H1 (cell line): ENCODE measurements at regions of chr9 and their contacts with region 1.

Region 1: GRCh38 chr9:134217832-134218629 is 53.7 kb upstream of the RNU6ATAC start:
- DNase-seq: no peak
- H3K4me3 ChIP-seq: no peak overlapping the region
- H3K27ac ChIP-seq: no peak overlapping the region
- H3K4me1 ChIP-seq: peaks cover 0 to 2% (median 0%) of the 10 kb centered on the region in 4 experiments; a peak in 2 of 7 replicates
- H3K27me3 ChIP-seq: no peaks in the 10 kb centered on the region
- CTCF ChIP-seq: peak in 2 of 3 experiments; percentile 24 to 27; a peak in 3 of 4 replicates
- EP300 ChIP-seq: no peak
- POLR2A ChIP-seq: no peak
- RAD21 ChIP-seq: peak; percentile 28 to 51; a peak in 3 of 4 replicates

Region 2: GRCh38 chr9:134178768-134179551 is 39.1 kb before region 1 on chr9:
- CTCF ChIA-PET with region 1: interaction called, 16 read pairs
- POLR2A ChIA-PET with region 1: interaction called, 3 read pairs
- DNase-seq: no peak
- H3K4me3 ChIP-seq: no peak overlapping the region
- H3K27ac ChIP-seq: no peak overlapping the region
- H3K4me1 ChIP-seq: peaks cover 0 to 20% (median 12%) of the 10 kb centered on the region in 4 experiments; a peak in 6 of 7 replicates
- H3K27me3 ChIP-seq: no peaks in the 10 kb centered on the region
- CTCF ChIP-seq: no peak
- EP300 ChIP-seq: no peak
- POLR2A ChIP-seq: no peak
- RAD21 ChIP-seq: no peak